ENCODE measurements at regions of chr17 and their contacts with region 1.

Region 1: DNA sequence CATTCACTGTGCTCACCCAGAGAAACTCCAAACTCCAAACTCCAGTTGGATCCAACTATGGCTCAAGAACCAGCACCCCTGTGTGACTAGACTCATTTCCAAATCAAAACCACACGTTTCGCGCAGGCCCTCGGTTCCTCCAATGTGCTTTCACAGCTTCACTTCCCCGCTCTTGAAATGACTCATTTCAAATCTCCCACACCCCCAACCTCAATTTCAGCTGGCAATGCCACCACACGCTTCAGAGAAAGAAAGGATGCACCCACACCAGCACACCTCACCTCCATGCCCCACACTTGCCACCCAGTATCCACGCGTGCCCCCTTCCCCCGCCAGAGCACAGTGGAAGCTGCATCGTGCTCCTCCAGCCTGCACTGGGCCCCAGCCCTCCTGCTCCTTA is 9.0 kb downstream of the TMEM92 start:
- DNase-seq: peak; percentile 74
- ATAC-seq: peak; percentile 66
- H3K4me3 Mint-ChIP-seq: no peak overlapping the region
- H3K27ac Mint-ChIP-seq: no peak overlapping the region
- H3K4me1 Mint-ChIP-seq: peaks cover 26% of the 10 kb centered on the region
- H3K27me3 Mint-ChIP-seq: peaks cover 23% of the 10 kb centered on the region

Region 2: DNA sequence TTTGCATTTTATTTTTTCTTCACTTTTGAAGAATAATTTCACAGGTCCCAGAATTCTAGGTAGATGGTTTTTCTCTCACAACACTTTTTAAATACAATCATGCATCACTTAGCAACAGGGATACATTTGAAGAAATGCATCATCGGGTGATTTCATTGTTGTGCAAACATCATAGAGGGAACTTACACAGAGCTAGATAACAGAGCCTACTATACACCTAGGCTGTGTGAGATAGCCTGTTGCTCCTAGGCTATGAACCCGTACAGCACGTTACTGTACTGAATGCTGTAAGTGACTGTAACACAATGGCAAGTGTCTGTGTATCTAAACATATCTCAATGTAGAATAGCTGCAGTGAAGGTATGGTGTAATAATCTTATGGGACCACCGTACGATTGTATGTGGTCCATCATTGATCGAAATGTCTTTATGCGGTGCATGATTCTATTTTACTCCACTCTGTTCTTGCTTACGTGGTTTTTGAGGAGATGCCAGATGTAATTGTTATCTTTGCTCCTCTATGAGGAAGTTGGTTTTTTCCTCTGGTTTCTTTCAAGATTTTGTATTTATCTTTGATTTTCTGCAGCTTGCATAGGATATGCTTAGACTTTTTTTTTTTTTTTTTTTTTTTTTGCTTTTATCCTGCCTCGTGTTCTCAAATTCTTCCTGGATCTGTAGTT is 44.5 kb before region 1 on chr17:
- CTCF ChIA-PET with region 1: no interaction called
- DNase-seq: no peak
- ATAC-seq: no peak
- H3K4me3 Mint-ChIP-seq: no peak overlapping the region
- H3K27ac Mint-ChIP-seq: no peak overlapping the region
- H3K4me1 Mint-ChIP-seq: no peaks in the 10 kb centered on the region
- H3K27me3 Mint-ChIP-seq: peaks cover 57% of the 10 kb centered on the region

Region 3: GRCh38 chr17:50297407-50297865 is 14.2 kb after region 1 on chr17:
- CTCF ChIA-PET with region 1: interaction called, 30 read pairs
- DNase-seq: peak; percentile 85
- ATAC-seq: peak; percentile 94
- H3K4me3 Mint-ChIP-seq: no peak overlapping the region
- H3K27ac Mint-ChIP-seq: no peak overlapping the region
- H3K4me1 Mint-ChIP-seq: peaks cover 12% of the 10 kb centered on the region
- H3K27me3 Mint-ChIP-seq: peaks cover 5% of the 10 kb centered on the region

Region 4: GRCh38 chr17:50372758-50373556 is 89.7 kb after region 1 on chr17 and contains the starts of genes EME1 and MRPL27:
- CTCF ChIA-PET with region 1: no interaction called
- DNase-seq: peak; percentile 93
- ATAC-seq: peak; percentile 94
- H3K4me3 Mint-ChIP-seq: peak within 1 kb of the TSS; percentile 94
- H3K27ac Mint-ChIP-seq: peak within 1 kb of the TSS; percentile 99
- H3K4me1 Mint-ChIP-seq: peaks cover 34% of the 10 kb centered on the region
- H3K27me3 Mint-ChIP-seq: no peaks in the 10 kb centered on the region
- total RNA-seq, gene EME1: 34.0 to 40.8 TPM
- total RNA-seq, gene MRPL27: 65.7 to 81.8 TPM

Measured in activated CD8-positive, alpha-beta memory T cell treated with anti-CD3 and anti-CD28 coated beads, Interleukin-2, amount 10 ng/mL, durations not matched to agents 7 days and 5 days (primary cell).